WTC11 (cell line): ENCODE measurements at regions of chr3 and their contacts with region 1.

Region 1: DNA sequence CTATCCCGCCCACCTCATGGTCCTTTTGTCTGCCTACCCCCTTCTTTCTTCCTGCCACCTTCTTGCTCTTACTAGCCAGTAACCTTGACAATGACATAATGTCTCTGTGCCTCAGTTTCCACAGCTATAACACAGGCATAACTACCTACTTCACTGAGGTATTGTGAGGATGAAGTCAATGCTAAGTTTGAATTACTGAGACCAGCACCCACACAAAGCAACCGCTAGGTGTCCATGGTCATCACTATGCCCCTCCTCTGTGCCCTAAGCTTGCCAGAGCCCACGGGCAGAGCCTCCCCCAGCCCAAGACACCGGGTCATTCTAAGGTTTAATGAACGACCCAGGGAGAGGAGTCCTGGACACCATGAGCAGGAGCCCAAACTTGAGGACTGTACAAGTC is 101.6 kb downstream of the OXNAD1 start:
- DNase-seq: peak; percentile 29
- ATAC-seq: peak; percentile 73
- H3K4me3 Mint-ChIP-seq: no peak overlapping the region
- H3K27ac Mint-ChIP-seq: no peak overlapping the region
- H3K4me1 Mint-ChIP-seq: peaks cover 27% of the 10 kb centered on the region
- H3K27me3 Mint-ChIP-seq: no peaks in the 10 kb centered on the region
- CTCF ChIP-seq: peak; percentile 39; the same call in 1 of the 2 replicates

Region 2: GRCh38 chr3:16419640-16420241 is 53.2 kb after region 1 on chr3:
- CTCF ChIA-PET with region 1: no interaction called
- POLR2A ChIA-PET with region 1: no interaction called
- DNase-seq: no peak
- ATAC-seq: 0 out of 2 replicates have a peak, but pooled peaks have one; percentile 28
- H3K4me3 Mint-ChIP-seq: no peak overlapping the region
- H3K27ac Mint-ChIP-seq: no peak overlapping the region
- H3K4me1 Mint-ChIP-seq: peaks cover 5% of the 10 kb centered on the region
- H3K27me3 Mint-ChIP-seq: no peaks in the 10 kb centered on the region
- CTCF ChIP-seq: no peak

Region 3: GRCh38 chr3:16482770-16483531 is 116.4 kb after region 1 on chr3:
- CTCF ChIA-PET with region 1: interaction called, 12 read pairs
- POLR2A ChIA-PET with region 1: no interaction called
- DNase-seq: peak; percentile 64
- ATAC-seq: peak; percentile 95
- H3K4me3 Mint-ChIP-seq: peak overlapping the region; percentile 12; the same call in 1 of the 2 replicates
- H3K27ac Mint-ChIP-seq: peak overlapping the region; percentile 85
- H3K4me1 Mint-ChIP-seq: peaks cover 47% of the 10 kb centered on the region
- H3K27me3 Mint-ChIP-seq: peaks cover 97% of the 10 kb centered on the region
- CTCF ChIP-seq: no peak

Region 4: DNA sequence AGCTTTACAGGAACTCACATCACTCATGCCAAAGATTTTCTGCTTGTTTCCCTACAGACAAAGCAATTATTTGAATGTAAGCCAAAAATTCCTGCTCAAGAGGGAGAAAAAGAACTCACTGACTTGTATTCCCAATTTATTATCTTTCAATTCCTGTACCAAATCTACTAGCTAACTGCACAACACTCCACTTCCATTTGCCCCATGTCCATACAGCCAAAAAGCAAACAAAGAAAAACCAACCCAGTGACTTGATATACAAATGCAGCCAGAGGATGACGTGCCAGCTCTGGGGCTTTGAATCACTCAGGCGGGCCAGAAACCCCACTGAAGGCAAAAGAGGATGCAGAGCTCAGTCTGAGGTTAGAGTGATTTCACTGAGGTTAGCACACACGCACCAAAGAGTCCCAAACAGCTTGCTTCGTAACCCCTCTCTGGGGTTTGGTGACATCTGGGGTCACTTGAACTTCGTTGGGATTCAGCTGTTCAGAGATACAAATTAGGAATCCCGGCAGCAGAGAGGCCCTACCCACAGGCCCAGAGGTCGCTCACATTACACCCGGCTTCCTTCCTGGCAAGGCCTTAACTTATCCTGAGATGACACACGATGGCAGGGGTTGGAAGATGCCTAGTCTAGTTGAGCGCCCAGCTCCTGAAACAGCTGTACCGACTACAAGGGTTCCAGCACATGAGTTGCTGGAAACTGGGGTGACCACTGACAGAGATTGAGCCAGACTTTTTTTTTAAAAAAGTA is 145.3 kb after region 1 on chr3:
- CTCF ChIA-PET with region 1: interaction called, 20 read pairs
- POLR2A ChIA-PET with region 1: no interaction called
- DNase-seq: no peak
- ATAC-seq: peak; percentile 27
- H3K4me3 Mint-ChIP-seq: peak overlapping the region; percentile 87
- H3K27ac Mint-ChIP-seq: no peak overlapping the region
- H3K4me1 Mint-ChIP-seq: peaks cover 36% of the 10 kb centered on the region
- H3K27me3 Mint-ChIP-seq: peaks cover 61% of the 10 kb centered on the region
- CTCF ChIP-seq: no peak

Region 5: DNA sequence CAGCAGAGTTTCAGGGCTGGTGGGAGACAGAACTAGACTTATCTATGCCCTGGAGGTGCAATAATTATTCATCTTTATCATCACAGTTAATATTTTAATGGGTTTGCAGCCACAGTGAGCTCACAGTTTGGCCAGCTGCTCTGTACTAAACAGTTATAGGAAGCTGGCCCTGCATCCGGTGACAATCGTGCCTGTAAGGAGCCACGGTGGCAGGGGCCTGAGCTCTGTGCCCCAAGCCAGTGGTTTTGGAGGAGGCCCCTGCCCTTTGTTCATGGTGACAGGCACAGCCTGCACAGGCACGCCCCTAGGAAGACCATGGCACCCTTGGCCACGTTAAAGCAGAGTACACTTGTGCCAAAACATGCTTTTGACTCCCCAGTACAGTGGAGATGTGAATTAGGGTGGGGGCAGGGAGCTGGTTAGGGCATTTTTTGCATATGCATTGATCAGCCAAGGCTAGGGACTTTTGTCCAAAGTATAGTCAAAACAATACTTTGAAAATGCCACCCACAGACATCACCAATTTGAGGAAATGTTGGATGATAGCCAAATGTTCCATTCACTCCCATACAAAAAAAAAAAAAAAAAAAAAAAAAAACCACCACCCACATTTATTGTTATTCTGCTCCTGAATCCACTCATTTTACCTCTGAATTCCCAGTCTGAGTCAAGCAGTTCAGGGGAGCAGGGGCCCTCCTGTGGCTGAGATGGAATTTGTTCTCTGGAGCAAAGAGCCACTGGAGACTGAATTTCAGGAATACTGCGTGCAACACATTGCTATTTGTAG is 150.3 kb after region 1 on chr3:
- CTCF ChIA-PET with region 1: interaction called, 20 read pairs
- POLR2A ChIA-PET with region 1: no interaction called
- DNase-seq: no peak
- ATAC-seq: peak; percentile 38
- H3K4me3 Mint-ChIP-seq: no peak overlapping the region
- H3K27ac Mint-ChIP-seq: no peak overlapping the region
- H3K4me1 Mint-ChIP-seq: peaks cover 28% of the 10 kb centered on the region
- H3K27me3 Mint-ChIP-seq: peaks cover 38% of the 10 kb centered on the region
- CTCF ChIP-seq: no peak

Region 6: GRCh38 chr3:16550676-16551341 is 184.2 kb after region 1 on chr3:
- CTCF ChIA-PET with region 1: interaction called, 13 read pairs
- POLR2A ChIA-PET with region 1: no interaction called
- DNase-seq: peak; percentile 73
- ATAC-seq: peak; percentile 94
- H3K4me3 Mint-ChIP-seq: peak overlapping the region; percentile 49
- H3K27ac Mint-ChIP-seq: peak overlapping the region; percentile 91
- H3K4me1 Mint-ChIP-seq: peaks cover 13% of the 10 kb centered on the region
- H3K27me3 Mint-ChIP-seq: peaks cover 3% of the 10 kb centered on the region; the same call in 1 of the 2 replicates
- CTCF ChIP-seq: peak; percentile 75

Region 7: GRCh38 chr3:16633948-16634347 is 267.4 kb after region 1 on chr3:
- CTCF ChIA-PET with region 1: no interaction called
- POLR2A ChIA-PET with region 1: no interaction called
- DNase-seq: no peak
- ATAC-seq: no peak
- H3K4me3 Mint-ChIP-seq: no peak overlapping the region
- H3K27ac Mint-ChIP-seq: no peak overlapping the region
- H3K4me1 Mint-ChIP-seq: no peaks in the 10 kb centered on the region
- H3K27me3 Mint-ChIP-seq: no peaks in the 10 kb centered on the region
- CTCF ChIP-seq: no peak